Activated B cell treated with CpG ODN at 0.5 μM for 24 hours (primary cell): ENCODE measurements at regions of chr10 and their contacts with region 1.

Region 1: DNA sequence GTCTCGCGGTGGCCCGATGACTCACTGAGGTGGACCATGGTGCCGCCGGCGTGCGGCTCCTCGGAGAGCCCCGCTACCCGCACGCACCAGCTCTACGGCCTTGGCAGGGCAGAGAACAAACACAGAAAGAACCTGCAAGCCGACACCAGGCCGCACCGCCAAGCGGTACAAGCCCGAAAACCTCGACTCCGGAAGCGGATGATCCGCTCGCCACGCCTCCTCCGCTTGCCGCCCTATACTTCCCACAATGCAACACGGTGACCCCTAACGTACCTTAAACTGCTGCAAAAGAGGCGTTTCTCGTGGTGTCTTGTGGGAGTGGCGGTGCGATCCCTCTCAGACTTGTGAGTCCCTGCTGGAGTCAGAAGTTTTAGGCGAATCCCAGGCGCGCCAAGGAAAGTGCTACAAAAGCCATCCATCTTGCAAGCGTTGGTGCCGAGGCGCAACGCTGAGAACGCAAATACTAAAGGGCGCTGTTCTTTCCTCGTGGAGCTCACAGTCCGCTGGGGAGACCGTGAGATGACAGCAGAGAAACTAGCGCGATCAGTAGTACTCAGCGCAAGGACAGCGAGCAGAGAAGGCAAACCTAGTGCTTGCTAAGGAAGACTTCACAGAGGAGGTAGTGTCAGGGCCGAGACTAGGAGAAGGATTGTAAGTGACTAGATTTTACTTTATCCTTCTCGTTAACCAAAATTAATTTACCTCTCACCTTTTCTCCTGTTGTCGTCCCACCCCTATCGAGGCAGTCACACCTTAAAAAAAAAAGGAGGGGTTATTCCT is at the start of gene MRPS16:
- DNase-seq: peak; percentile 84
- ATAC-seq: peak; percentile 89
- H3K4me3 Mint-ChIP-seq: peak within 1 kb of the TSS; percentile 99
- H3K27ac Mint-ChIP-seq: peak within 1 kb of the TSS; percentile 95
- H3K4me1 Mint-ChIP-seq: peaks cover 44% of the 10 kb centered on the region
- H3K27me3 Mint-ChIP-seq: no peaks in the 10 kb centered on the region
- CTCF ChIP-seq: no peak
- total RNA-seq, gene MRPS16: 85.9 and 88.5 TPM in 2 replicates

Region 2: GRCh38 chr10:72625608-72626443 is 626.8 kb before region 1 on chr10 and contains the start of gene MICU1:
- CTCF ChIA-PET with region 1: no interaction called
- POLR2A ChIA-PET with region 1: interaction called, 3 read pairs
- intact Hi-C with region 1: loop called (anchors 1 kb)
- DNase-seq: peak; percentile 83
- ATAC-seq: peak; percentile 98
- H3K4me3 Mint-ChIP-seq: peak within 1 kb of the TSS; percentile 100
- H3K27ac Mint-ChIP-seq: peak within 1 kb of the TSS; percentile 97
- H3K4me1 Mint-ChIP-seq: peaks cover 12% of the 10 kb centered on the region
- H3K27me3 Mint-ChIP-seq: no peaks in the 10 kb centered on the region
- CTCF ChIP-seq: no peak
- total RNA-seq, gene MICU1: 27.4 and 34.5 TPM in 2 replicates

Region 3: GRCh38 chr10:73182568-73182967 is 70.1 kb before region 1 on chr10:
- CTCF ChIA-PET with region 1: no interaction called
- POLR2A ChIA-PET with region 1: interaction called, 14 read pairs
- intact Hi-C with region 1: no loop called
- DNase-seq: no peak
- ATAC-seq: no peak
- H3K4me3 Mint-ChIP-seq: no peak overlapping the region
- H3K27ac Mint-ChIP-seq: no peak overlapping the region
- H3K4me1 Mint-ChIP-seq: no peaks in the 10 kb centered on the region
- H3K27me3 Mint-ChIP-seq: no peaks in the 10 kb centered on the region
- CTCF ChIP-seq: no peak

Region 4: GRCh38 chr10:73358331-73359279 is 106.0 kb after region 1 on chr10 and contains the start of gene CFAP70:
- CTCF ChIA-PET with region 1: no interaction called
- POLR2A ChIA-PET with region 1: no interaction called
- intact Hi-C with region 1: loop called (anchors 1 kb)
- DNase-seq: peak; percentile 77
- ATAC-seq: peak; percentile 98
- H3K4me3 Mint-ChIP-seq: peak within 1 kb of the TSS; percentile 97
- H3K27ac Mint-ChIP-seq: peak within 1 kb of the TSS; percentile 91
- H3K4me1 Mint-ChIP-seq: peaks cover 14% of the 10 kb centered on the region
- H3K27me3 Mint-ChIP-seq: peaks cover 2% of the 10 kb centered on the region
- CTCF ChIP-seq: no peak
- total RNA-seq, gene CFAP70: 1.2 and 1.7 TPM in 2 replicates